Activated B cell treated with CpG ODN at 0.5 μM for 24 hours (primary cell): ENCODE measurements at regions of chr11 and their contacts with region 1.

Region 1: DNA sequence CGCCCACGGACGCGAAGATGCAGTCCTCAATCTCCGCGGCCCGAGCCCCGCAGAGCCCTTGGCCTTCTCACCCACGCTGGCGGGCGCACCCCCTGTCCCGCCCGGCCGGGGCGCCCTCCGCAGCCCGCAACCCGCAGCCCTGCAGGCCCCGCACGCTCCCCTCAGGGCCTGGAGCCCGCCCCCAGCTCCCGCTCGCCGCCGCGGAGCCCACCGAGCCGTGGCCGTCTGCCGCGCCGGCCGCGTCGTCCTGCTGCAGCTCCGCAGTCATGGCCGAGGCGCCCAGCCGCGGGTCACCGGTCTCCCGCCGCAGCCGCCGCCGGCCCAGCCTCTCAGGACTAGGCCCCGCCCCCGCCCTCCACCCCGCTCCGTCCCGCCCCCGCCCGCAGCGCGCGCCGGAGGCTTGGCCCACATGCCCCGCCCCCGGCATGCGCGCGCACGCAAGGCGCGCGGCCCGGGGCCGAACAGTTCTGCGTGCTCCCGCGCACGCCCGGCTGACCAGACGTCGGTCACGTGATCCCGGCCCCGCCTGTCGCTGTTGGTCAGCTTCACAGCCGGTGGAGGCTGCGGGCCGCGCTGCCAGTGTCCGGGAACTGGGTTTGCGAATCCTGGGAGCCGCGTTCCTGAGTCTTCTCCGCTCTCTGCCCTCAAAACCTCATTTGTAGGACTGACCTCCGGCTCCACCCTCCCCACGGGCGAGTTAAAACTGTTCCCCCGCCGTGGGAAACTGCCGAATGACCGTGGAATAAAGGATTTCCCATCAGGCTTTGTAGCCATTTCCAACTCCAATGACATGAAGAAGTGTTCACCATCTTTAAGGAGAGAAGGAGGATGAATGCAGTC is at the start of gene USP28:
- DNase-seq: peak; percentile 92
- ATAC-seq: peak; percentile 86
- H3K4me3 Mint-ChIP-seq: peak within 1 kb of the TSS; percentile 96
- H3K27ac Mint-ChIP-seq: peak within 1 kb of the TSS; percentile 97
- H3K4me1 Mint-ChIP-seq: peaks cover 66% of the 10 kb centered on the region
- H3K27me3 Mint-ChIP-seq: no peaks in the 10 kb centered on the region
- CTCF ChIP-seq: no peak
- total RNA-seq, gene USP28: 39.6 and 49.6 TPM in 2 replicates

Region 2: GRCh38 chr11:113314389-113315301 is 560.8 kb before region 1 on chr11 and contains the start of gene TTC12:
- CTCF ChIA-PET with region 1: no interaction called
- POLR2A ChIA-PET with region 1: no interaction called
- intact Hi-C with region 1: loop called (anchors 1 kb)
- DNase-seq: peak; percentile 98
- ATAC-seq: peak; percentile 99
- H3K4me3 Mint-ChIP-seq: peak within 1 kb of the TSS; percentile 85
- H3K27ac Mint-ChIP-seq: peak within 1 kb of the TSS; percentile 83
- H3K4me1 Mint-ChIP-seq: peaks cover 19% of the 10 kb centered on the region
- H3K27me3 Mint-ChIP-seq: no peaks in the 10 kb centered on the region
- CTCF ChIP-seq: no peak
- total RNA-seq, gene TTC12: 21.3 and 25.2 TPM in 2 replicates

Region 3: DNA sequence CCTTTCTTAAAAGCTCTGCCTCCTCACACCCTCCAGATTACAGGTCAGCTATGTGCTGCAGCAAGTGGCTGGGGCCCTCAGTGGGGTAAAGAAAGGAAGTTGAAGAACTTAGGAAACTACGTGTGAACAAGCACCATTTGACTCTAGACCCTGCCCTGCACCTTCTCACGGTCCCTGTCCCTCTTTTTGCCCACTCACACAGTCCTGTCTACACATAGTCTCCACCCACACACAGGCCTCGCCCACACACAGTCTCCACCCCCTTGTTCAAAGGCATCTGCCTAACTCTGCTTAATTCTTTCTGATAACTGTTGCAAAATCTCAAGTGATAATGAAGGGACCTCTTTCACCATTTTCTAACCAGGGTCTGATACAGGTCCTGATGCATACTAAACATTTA is 228.3 kb before region 1 on chr11:
- CTCF ChIA-PET with region 1: no interaction called
- POLR2A ChIA-PET with region 1: no interaction called
- intact Hi-C with region 1: no loop called
- DNase-seq: no peak
- ATAC-seq: no peak
- H3K4me3 Mint-ChIP-seq: no peak overlapping the region
- H3K27ac Mint-ChIP-seq: no peak overlapping the region
- H3K4me1 Mint-ChIP-seq: no peaks in the 10 kb centered on the region
- H3K27me3 Mint-ChIP-seq: no peaks in the 10 kb centered on the region
- CTCF ChIP-seq: no peak

Region 4: GRCh38 chr11:113806406-113806805 is 69.0 kb before region 1 on chr11:
- CTCF ChIA-PET with region 1: interaction called, 3 read pairs
- POLR2A ChIA-PET with region 1: interaction called, 3 read pairs
- intact Hi-C with region 1: loop called (anchors 2 kb)
- DNase-seq: no peak
- ATAC-seq: peak; percentile 57
- H3K4me3 Mint-ChIP-seq: no peak overlapping the region
- H3K27ac Mint-ChIP-seq: no peak overlapping the region
- H3K4me1 Mint-ChIP-seq: peaks cover 1% of the 10 kb centered on the region
- H3K27me3 Mint-ChIP-seq: no peaks in the 10 kb centered on the region
- CTCF ChIP-seq: no peak

Region 5: DNA sequence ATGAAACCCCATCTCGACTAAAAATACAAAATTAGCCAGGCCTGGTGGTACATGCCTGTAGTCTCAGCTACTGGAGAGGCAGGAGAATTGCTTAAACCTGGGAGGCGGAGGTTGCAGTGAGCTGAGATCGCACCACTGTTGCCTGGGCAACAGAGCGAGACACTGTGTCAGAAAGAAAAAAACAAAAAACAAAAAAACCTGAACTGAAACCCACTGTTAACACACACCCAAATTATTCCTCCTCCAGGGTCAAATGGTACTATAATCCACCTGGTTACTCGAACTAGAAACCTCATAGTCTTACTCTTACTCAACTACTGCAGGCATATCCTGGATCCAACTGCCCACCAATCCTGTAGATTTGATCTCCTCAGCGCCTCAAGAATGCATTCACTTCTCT is 35.6 kb before region 1 on chr11:
- CTCF ChIA-PET with region 1: no interaction called
- POLR2A ChIA-PET with region 1: interaction called, 13 read pairs
- intact Hi-C with region 1: loop called (anchors 1 kb)
- DNase-seq: peak; percentile 30
- ATAC-seq: peak; percentile 91
- H3K4me3 Mint-ChIP-seq: peak overlapping the region; percentile 66
- H3K27ac Mint-ChIP-seq: no peak overlapping the region
- H3K4me1 Mint-ChIP-seq: peaks cover 37% of the 10 kb centered on the region
- H3K27me3 Mint-ChIP-seq: no peaks in the 10 kb centered on the region
- CTCF ChIP-seq: no peak

Region 6: GRCh38 chr11:114197799-114198500 is 322.5 kb after region 1 on chr11:
- CTCF ChIA-PET with region 1: no interaction called
- POLR2A ChIA-PET with region 1: no interaction called
- intact Hi-C with region 1: no loop called
- DNase-seq: no peak
- ATAC-seq: no peak
- H3K4me3 Mint-ChIP-seq: no peak overlapping the region
- H3K27ac Mint-ChIP-seq: no peak overlapping the region
- H3K4me1 Mint-ChIP-seq: peaks cover 45% of the 10 kb centered on the region
- H3K27me3 Mint-ChIP-seq: no peaks in the 10 kb centered on the region
- CTCF ChIP-seq: no peak

Region 7: GRCh38 chr11:114400217-114400914 is 524.9 kb after region 1 on chr11 and contains the starts of genes C11orf71 and RBM7:
- CTCF ChIA-PET with region 1: no interaction called
- POLR2A ChIA-PET with region 1: interaction called, 3 read pairs
- intact Hi-C with region 1: loop called (anchors 1 kb)
- DNase-seq: peak; percentile 93
- ATAC-seq: peak; percentile 93
- H3K4me3 Mint-ChIP-seq: peak within 1 kb of the TSS; percentile 96
- H3K27ac Mint-ChIP-seq: peak within 1 kb of the TSS; percentile 98
- H3K4me1 Mint-ChIP-seq: peaks cover 50% of the 10 kb centered on the region
- H3K27me3 Mint-ChIP-seq: no peaks in the 10 kb centered on the region
- CTCF ChIP-seq: no peak
- total RNA-seq, gene C11orf71: 9.5 and 11.1 TPM in 2 replicates
- total RNA-seq, gene RBM7: 33.6 and 34.1 TPM in 2 replicates

Region 8: GRCh38 chr11:115249116-115249515 is 1373.7 kb after region 1 on chr11:
- CTCF ChIA-PET with region 1: no interaction called
- POLR2A ChIA-PET with region 1: interaction called, 11 read pairs
- intact Hi-C with region 1: no loop called
- DNase-seq: no peak
- ATAC-seq: no peak
- H3K4me3 Mint-ChIP-seq: no peak overlapping the region
- H3K27ac Mint-ChIP-seq: no peak overlapping the region
- H3K4me1 Mint-ChIP-seq: no peaks in the 10 kb centered on the region
- H3K27me3 Mint-ChIP-seq: no peaks in the 10 kb centered on the region
- CTCF ChIP-seq: no peak